ENCODE measurements at regions of chr12 and their contacts with region 1.

Region 1: GRCh38 chr12:76083904-76084862 is at the start of gene NAP1L1:
- DNase-seq: peak; percentile 98
- H3K4me3 Mint-ChIP-seq: peak within 1 kb of the TSS; percentile 96
- H3K27ac Mint-ChIP-seq: peak within 1 kb of the TSS; percentile 99
- H3K4me1 Mint-ChIP-seq: peaks cover 53% of the 10 kb centered on the region
- H3K27me3 Mint-ChIP-seq: no peaks in the 10 kb centered on the region
- total RNA-seq, gene NAP1L1: 524 to 558 TPM

Region 2: DNA sequence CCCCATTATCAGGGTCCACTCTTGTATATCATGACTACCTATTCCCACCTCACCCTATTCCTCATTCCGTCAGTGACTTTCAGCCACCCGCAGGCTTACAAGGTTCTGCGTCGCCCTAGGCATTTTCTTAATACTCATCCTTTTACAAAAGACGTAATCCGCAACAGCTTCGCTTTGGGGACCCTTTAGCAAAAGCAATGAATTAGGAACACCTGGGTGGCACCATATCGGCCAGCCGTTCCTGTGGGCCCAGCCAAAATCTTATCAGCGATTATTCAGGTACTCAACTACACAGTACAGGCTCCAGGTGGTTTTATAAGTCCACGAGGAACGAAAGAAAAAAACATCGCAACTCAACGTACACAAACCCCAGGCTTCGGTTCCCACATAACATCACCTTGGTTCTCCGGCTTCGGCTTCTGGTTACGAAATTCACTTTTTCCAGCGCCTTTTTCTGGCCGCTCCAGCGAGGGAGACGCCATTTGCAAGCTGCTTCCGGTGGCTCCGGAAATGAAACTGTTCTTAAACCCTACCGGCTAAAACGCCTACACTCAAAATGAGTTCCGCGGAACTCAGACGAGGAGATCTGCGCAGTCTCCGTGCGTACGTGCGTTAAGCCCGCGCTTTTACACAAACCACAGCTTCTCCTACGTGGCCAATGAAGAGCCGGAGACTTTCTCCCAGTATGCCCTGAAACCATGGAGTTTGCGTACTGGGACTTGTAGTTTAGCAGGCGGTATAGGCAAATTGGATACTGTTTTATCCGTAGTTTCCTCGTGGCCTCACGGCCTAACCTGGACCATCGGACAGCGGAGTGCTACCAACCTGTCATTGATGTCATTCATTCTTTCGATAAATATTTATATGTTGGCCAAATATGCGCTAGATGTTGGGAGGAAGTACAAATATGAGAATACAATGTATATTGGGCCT is 572.8 kb before region 1 on chr12 and contains the start of gene KRR1:
- CTCF ChIA-PET with region 1: interaction called, 3 read pairs
- POLR2A ChIA-PET with region 1: interaction called, 19 read pairs
- DNase-seq: peak; percentile 94
- H3K4me3 Mint-ChIP-seq: peak within 1 kb of the TSS; percentile 96
- H3K27ac Mint-ChIP-seq: peak within 1 kb of the TSS; percentile 98
- H3K4me1 Mint-ChIP-seq: peaks cover 33% of the 10 kb centered on the region
- H3K27me3 Mint-ChIP-seq: no peaks in the 10 kb centered on the region
- total RNA-seq, gene KRR1: 61.8 to 67.2 TPM

Region 3: DNA sequence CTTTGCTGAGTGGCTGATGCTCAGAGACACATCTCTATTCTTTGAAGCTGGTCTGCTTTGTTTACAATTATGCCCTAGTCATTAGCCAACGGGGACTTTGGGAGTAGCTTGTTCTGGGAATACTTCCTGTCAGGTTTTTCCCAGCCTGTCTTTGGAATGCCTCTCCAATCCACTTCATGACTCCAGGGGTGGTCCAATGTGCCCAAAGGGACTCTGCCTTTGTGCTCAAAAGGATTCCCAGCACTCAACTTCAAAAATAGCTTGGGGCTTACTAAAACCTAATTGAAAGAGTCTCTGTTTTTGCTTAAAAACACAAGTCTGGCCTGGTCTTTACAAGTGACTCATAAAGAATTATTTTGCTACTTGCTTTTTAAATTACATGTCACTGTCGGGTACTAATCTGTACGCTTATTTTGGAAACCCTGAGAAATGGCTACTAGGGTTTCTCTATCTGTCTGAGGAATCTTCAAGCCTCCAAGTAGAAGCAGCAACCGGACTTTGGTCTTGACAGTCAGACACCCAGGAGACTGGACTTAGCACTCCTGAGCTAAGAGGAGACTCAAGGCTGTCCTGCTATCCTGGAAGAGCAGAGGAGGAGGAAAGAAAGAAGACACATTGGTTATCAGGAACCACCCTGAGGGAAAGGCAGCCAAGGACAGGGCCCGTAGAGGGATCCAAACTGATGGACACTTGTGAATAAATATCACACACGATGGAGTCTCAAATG is 73.3 kb before region 1 on chr12:
- CTCF ChIA-PET with region 1: no interaction called
- POLR2A ChIA-PET with region 1: no interaction called
- DNase-seq: no peak
- H3K4me3 Mint-ChIP-seq: no peak overlapping the region
- H3K27ac Mint-ChIP-seq: no peak overlapping the region
- H3K4me1 Mint-ChIP-seq: peaks cover 13% of the 10 kb centered on the region
- H3K27me3 Mint-ChIP-seq: peaks cover 4% of the 10 kb centered on the region

Region 4: DNA sequence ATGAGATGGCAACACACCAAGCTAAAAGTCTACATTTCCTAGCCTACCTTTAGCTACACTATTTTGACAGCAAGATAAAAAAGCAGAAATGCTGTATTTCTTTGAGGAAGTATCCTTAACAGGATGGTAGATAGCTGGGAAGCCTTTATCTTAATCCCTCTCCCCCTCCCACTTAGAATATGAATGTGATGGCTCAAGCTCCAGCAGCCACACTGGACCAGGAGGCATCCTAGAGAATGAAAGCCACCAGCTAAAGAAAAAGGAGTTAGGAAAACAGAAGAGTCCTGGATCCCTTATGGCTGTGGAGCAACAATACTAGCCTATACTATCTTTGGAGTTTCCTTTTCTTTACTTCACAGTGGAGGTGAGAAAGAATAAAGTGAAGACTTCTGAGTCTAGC is 14.8 kb before region 1 on chr12:
- CTCF ChIA-PET with region 1: no interaction called
- POLR2A ChIA-PET with region 1: interaction called, 12 read pairs
- DNase-seq: no peak
- H3K4me3 Mint-ChIP-seq: no peak overlapping the region
- H3K27ac Mint-ChIP-seq: no peak overlapping the region
- H3K4me1 Mint-ChIP-seq: peaks cover 41% of the 10 kb centered on the region
- H3K27me3 Mint-ChIP-seq: no peaks in the 10 kb centered on the region

Region 5: DNA sequence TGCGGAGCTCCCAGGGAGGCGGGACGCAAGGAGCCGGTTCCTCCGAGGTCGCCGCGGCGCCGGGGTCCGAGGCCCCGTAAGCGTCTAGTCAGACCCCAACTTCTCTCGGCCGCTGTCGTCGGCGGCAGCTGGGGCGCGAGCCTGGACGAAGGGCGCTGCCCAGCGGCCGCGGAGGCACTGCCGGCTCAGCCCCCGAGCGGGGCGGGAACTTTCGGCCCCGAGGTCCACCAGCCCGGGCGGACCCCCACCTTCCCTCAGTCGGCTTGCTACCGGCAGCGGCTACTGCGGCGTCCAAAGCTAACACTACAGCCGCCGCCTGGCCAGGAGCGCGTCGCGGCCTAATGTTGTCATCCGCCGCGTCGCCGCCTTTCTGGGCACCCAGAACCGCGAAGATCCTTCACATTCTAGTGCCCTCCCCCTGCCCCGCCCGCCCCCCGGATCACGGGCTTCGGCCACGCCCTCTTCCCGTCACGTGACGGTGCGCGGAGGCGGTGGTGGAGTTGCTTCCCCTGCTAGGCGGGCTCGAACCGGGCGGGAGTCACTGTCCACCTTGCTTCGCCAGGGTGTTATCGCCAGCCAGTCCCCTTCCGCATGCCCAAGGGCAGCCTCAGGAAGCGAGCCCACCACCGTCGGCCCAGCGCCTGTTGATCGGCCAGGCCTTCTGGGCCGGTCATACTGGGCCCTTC is 475.4 kb after region 1 on chr12 and contains the start of gene OSBPL8:
- CTCF ChIA-PET with region 1: no interaction called
- POLR2A ChIA-PET with region 1: interaction called, 13 read pairs
- DNase-seq: peak; percentile 98
- H3K4me3 Mint-ChIP-seq: peak within 1 kb of the TSS; percentile 86
- H3K27ac Mint-ChIP-seq: peak within 1 kb of the TSS; percentile 95
- H3K4me1 Mint-ChIP-seq: peaks cover 43% of the 10 kb centered on the region
- H3K27me3 Mint-ChIP-seq: peaks cover 5% of the 10 kb centered on the region
- total RNA-seq, gene OSBPL8: 113 to 121 TPM